ENCODE measurements at regions of chr16 and their contacts with region 1.

Region 1: DNA sequence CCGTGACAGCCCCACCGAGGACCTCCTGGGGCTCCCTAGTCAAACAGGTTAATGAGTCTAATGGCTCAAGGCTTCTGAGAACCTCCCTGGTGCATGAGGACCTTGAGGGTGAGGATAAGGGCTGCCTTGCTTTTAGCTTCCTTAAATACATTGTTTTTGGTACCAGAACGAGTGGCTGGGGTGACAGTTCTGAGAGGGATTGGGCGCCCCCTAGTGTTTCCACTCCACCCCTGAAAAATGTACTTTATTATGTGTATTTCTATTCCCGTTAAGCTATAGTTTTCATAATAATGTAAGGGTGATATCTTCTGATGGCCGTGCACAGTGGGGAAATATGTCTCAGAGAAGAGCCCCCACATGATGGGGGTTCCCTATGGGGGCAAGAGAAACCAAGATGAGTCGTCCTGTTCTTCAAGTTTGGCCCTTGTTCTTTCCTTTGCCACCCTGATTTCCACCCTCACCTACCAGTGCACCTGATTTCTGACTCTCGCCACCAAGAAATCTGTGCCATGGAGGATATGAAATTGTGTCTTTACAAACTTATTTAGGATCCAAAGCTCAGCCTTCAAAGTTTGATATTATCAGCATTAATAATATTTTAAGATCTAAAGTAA is 14.5 kb upstream of the VWA3A start:
- DNase-seq: peak; percentile 76
- H3K4me3 Mint-ChIP-seq: no peak overlapping the region
- H3K27ac Mint-ChIP-seq: no peak overlapping the region
- H3K4me1 Mint-ChIP-seq: peaks cover 3% of the 10 kb centered on the region
- H3K27me3 Mint-ChIP-seq: no peaks in the 10 kb centered on the region

Region 2: DNA sequence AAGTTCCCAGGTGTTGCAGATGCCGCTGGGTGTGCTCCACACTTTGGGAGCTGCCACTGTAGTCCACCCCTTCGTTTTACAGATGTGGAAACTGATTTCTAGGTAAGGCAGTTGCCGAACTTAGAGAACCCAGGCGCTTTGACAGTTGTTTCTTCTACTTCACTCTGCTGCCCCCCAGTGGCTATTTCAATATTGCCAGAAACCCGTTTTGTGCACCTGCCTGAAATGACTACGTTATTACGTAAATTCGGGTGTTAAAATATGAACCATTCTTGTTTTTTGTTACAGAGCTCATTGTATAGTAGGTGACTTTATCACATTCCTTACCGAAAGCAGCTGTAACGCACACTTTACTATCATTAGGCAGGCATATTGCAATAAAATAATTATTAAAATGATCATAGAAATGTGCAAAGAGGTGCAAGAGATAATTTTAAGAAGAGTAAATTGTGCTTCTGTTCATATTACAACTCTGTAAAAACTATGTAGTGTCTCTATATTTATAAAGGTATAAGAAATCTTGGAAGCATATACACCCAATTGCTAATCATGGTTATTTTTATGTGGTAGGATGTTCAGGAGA is 369.2 kb before region 1 on chr16:
- CTCF ChIA-PET with region 1: no interaction called
- POLR2A ChIA-PET with region 1: no interaction called
- DNase-seq: peak; percentile 86
- H3K4me3 Mint-ChIP-seq: no peak overlapping the region
- H3K27ac Mint-ChIP-seq: no peak overlapping the region
- H3K4me1 Mint-ChIP-seq: peaks cover 10% of the 10 kb centered on the region
- H3K27me3 Mint-ChIP-seq: no peaks in the 10 kb centered on the region

Region 3: DNA sequence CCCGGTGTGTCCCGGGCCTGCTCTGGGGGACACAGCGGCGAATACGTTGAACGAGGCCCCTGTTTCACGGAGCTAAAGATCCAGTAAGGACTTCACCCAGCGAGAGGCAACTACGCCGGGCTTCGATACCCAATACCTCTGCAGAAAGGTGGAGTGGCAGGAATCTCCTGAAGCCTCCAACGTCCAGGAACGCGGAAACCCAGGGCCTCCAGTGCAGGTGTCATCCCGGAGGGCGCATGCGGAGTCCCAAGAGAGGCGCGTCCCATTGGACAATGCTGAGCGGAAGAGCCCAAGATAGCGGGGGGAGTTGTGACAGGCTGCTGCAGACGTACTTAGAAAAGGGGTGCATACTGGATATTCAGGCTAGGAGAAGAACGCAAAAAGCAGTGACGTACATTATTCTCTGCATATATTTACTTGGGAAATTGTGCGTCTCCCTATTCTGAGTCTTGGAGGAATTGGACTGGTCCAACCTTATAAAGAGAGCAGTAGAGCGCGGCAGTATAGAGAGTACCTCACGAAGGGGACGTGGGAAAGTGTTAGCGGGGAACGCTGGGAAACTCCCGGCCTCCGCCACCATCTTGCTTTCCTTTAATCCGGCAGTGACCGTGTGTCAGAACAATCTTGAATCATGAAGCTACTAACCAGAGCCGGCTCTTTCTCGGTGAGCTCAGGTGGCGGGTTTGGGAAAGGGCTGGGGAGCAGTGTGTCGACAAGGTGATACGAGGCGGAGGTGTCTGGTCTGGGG is 124.8 kb before region 1 on chr16 and contains the start of gene UQCRC2:
- CTCF ChIA-PET with region 1: interaction called, 10 read pairs
- POLR2A ChIA-PET with region 1: interaction called, 6 read pairs
- DNase-seq: peak; percentile 87
- H3K4me3 Mint-ChIP-seq: peak within 1 kb of the TSS; percentile 97
- H3K27ac Mint-ChIP-seq: peak within 1 kb of the TSS; percentile 82
- H3K4me1 Mint-ChIP-seq: peaks cover 69% of the 10 kb centered on the region
- H3K27me3 Mint-ChIP-seq: no peaks in the 10 kb centered on the region
- total RNA-seq, gene UQCRC2: 216 to 225 TPM

Region 4: GRCh38 chr16:22001591-22001990 is 76.2 kb before region 1 on chr16:
- CTCF ChIA-PET with region 1: interaction called, 319 read pairs
- POLR2A ChIA-PET with region 1: interaction called, 9 read pairs
- DNase-seq: no peak
- H3K4me3 Mint-ChIP-seq: no peak overlapping the region
- H3K27ac Mint-ChIP-seq: no peak overlapping the region
- H3K4me1 Mint-ChIP-seq: peaks cover 11% of the 10 kb centered on the region
- H3K27me3 Mint-ChIP-seq: no peaks in the 10 kb centered on the region

Region 5: GRCh38 chr16:22014271-22014873 is 63.4 kb before region 1 on chr16:
- CTCF ChIA-PET with region 1: interaction called, 319 read pairs
- POLR2A ChIA-PET with region 1: interaction called, 4 read pairs
- DNase-seq: no peak
- H3K4me3 Mint-ChIP-seq: no peak overlapping the region
- H3K27ac Mint-ChIP-seq: no peak overlapping the region
- H3K4me1 Mint-ChIP-seq: peaks cover 27% of the 10 kb centered on the region
- H3K27me3 Mint-ChIP-seq: no peaks in the 10 kb centered on the region

Region 6: DNA sequence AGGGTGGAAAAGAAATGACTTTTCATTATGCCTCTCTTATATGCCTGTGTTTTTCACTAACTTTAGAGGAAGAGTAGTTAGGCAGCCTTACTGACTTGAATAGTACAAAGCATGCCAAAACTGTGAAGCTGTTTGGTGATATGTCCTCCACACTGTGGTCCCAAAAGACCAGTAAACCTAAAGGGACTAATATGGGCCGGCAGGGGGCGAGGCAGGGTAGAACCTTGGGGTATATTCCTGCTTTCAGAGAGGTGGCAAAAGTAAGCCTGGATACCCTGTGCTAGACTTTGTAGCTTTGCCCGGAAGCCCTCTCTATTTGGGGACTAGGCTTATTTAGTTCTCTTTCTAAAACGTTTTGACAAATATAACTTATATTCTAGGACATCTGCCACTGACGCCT is 21.9 kb before region 1 on chr16:
- CTCF ChIA-PET with region 1: interaction called, 26 read pairs
- POLR2A ChIA-PET with region 1: no interaction called
- DNase-seq: no peak
- H3K4me3 Mint-ChIP-seq: no peak overlapping the region
- H3K27ac Mint-ChIP-seq: no peak overlapping the region
- H3K4me1 Mint-ChIP-seq: peaks cover 32% of the 10 kb centered on the region
- H3K27me3 Mint-ChIP-seq: no peaks in the 10 kb centered on the region

Region 7: DNA sequence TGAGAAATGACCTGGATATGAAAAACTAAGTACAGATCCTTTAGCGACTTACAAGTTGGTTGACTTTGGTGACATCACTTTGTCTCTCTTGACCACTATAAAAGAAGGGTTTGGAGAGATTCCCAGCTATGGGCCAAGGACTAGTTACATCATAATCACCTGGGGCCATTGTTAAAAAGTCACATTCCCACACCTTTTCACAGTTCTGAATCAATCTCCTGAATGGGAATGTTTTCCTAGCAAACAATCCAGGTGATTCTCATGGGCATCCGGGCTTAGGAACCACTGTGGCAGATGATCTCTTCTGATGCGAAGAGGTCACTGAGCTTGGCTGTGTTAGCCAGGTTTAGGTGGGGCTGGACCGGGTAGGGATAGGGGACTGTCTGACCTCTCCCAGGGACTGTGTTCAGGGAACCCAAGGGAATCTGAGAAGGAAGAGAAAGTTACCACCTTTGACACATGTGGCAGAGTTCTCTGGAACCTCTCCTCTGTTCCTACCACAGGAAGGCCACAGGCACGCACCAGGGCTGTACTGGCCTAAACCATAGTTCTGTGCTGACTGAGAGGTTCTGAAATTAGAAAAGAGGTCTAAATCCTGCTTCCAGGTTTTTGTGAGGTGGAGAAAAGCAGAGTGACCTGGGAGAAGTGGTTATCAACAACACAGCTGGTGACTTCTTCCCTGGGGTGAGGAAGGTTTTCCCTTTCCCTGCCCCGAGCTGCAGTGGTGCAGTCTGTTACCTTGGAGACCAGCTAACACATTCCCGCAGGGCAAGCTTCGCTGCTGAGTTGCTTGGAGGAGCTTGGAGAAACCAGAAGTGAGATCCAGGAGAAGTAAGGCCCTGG is 14.2 kb after region 1 on chr16 and contains the start of gene VWA3A:
- CTCF ChIA-PET with region 1: interaction called, 31 read pairs
- POLR2A ChIA-PET with region 1: interaction called, 5 read pairs
- DNase-seq: no peak
- H3K4me3 Mint-ChIP-seq: no peak within 1 kb of the TSS
- H3K27ac Mint-ChIP-seq: no peak within 1 kb of the TSS
- H3K4me1 Mint-ChIP-seq: no peaks in the 10 kb centered on the region
- H3K27me3 Mint-ChIP-seq: peaks cover 12% of the 10 kb centered on the region
- total RNA-seq, gene VWA3A: 0.18 TPM in 1 of 2 experiments, not detected in the other

Region 8: GRCh38 chr16:22141746-22142145 is 63.9 kb after region 1 on chr16:
- CTCF ChIA-PET with region 1: interaction called, 10 read pairs
- POLR2A ChIA-PET with region 1: no interaction called
- DNase-seq: no peak
- H3K4me3 Mint-ChIP-seq: no peak overlapping the region
- H3K27ac Mint-ChIP-seq: no peak overlapping the region
- H3K4me1 Mint-ChIP-seq: no peaks in the 10 kb centered on the region
- H3K27me3 Mint-ChIP-seq: peaks cover 5% of the 10 kb centered on the region

Region 9: DNA sequence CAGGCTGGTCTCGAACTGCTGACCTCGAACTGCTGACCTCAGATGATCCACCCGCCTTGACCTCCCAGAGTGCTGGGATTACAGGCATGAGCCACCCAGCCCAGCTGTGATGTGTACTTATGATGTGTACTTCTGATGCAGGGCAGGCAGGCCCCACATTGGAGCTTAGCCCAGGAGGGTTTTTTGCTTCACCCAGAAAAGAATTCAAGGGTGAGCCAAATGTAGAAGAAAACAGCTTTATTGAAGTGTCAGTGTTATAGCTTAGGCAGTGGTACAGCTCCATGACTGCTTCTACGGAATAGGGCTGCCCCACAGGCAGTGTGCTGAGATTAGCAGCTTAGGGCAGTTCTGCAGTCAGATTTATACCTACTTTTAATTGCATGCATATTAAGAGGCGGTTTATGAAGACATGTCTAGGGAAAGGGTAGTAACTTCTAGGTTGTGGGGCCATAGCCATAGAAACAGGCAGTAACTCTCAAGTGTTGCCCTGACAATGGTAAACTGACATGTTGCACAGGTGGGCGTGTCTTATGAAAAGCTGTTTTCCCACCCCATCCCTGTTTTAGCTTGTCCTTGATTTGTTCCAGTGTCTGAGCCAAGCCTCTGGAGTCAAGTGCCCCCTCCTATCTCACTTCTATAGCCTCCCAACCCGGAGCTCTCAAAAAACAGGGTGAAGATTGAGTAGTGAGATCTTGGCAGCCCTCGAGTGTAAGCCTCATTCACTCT is 195.2 kb after region 1 on chr16:
- CTCF ChIA-PET with region 1: no interaction called
- POLR2A ChIA-PET with region 1: no interaction called
- DNase-seq: no peak
- H3K4me3 Mint-ChIP-seq: no peak overlapping the region
- H3K27ac Mint-ChIP-seq: no peak overlapping the region
- H3K4me1 Mint-ChIP-seq: peaks cover 8% of the 10 kb centered on the region
- H3K27me3 Mint-ChIP-seq: no peaks in the 10 kb centered on the region

Measured in activated CD4-positive, alpha-beta memory T cell treated with anti-CD3 and anti-CD28 coated beads, Interleukin-2, amount 10 ng/mL, durations not matched to agents 7 days and 5 days (primary cell).